ENCODE measurements at regions of chr3 and their contacts with region 1.

Region 1: GRCh38 chr3:187745201-187746058 is at the start of gene BCL6:
- DNase-seq: peak; percentile 92 to 99
- H3K4me3 ChIP-seq: peak within 1 kb of the TSS; percentile 88
- H3K27ac ChIP-seq: peak within 1 kb of the TSS; percentile 94
- H3K4me1 ChIP-seq: peaks cover 48% of the 10 kb centered on the region
- H3K27me3 ChIP-seq: no peaks in the 10 kb centered on the region
- CTCF ChIP-seq: 0 out of 2 replicates have a peak, but pooled peaks have one; percentile 19
- total RNA-seq, gene BCL6: 37.1 and 42.2 TPM in 2 replicates

Region 2: DNA sequence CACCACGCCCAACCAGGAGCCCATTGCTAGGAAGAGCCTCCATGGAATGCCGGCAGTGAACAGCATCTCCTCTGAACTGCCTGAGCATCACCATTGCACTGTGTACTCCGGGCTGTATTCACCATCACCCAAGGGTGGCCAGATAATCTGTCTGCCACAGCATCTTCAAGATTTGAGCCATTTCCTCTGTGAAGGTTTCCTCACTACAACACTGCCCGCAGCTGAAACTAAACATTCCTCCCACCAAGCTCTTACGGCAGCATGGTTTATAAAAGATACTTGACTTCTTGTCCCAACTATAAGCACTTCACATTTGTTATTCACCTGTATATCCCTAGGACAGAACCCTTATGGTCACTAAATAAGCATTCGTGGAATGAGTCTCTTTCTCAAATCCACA is 201.1 kb before region 1 on chr3:
- CTCF ChIA-PET with region 1: no interaction called
- POLR2A ChIA-PET with region 1: interaction called, 12 read pairs
- intact Hi-C with region 1: no loop called
- DNase-seq: no peak
- H3K4me3 ChIP-seq: no peak overlapping the region
- H3K27ac ChIP-seq: no peak overlapping the region
- H3K4me1 ChIP-seq: no peaks in the 10 kb centered on the region
- H3K27me3 ChIP-seq: peaks cover 72% of the 10 kb centered on the region
- CTCF ChIP-seq: no peak

Region 3: DNA sequence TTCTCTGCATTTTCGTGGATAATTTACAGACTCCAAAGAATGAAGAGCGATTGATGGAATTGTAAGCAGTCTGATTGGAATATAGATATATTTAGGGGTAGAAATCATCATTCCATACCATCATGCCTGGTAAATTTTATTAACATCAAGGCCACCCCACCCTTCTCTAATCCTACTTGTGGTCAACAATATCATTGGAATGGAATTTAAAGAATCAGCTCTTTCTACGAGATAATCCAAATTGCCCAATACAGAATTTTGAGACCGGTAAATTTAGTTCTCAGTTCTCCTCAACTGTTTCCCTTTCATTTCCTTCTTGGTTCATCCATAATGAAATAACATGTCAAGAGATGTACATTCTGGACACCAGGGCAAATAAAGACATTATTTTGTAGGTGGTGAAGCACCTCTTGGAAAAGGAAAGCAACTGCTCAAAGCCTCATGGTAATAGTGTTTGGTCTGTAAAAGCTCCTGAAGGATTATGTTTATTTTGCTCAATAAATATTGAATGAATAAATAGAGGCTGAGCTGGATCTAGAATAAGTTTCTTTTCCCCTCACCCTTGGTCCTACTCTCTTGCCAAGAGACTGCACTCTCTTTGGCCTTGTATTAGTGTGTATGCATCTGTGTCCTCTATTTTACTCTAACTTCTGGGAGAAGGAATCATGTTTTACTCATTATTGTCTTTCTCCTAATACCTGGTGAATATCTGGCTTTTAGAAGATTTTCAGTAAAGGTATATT is 133.5 kb after region 1 on chr3:
- CTCF ChIA-PET with region 1: no interaction called
- POLR2A ChIA-PET with region 1: interaction called, 7 read pairs
- intact Hi-C with region 1: loop called (anchors 1 kb)
- DNase-seq: peak; percentile 19 to 96
- H3K4me3 ChIP-seq: peak overlapping the region; percentile 30; the same call in 1 of the 2 replicates
- H3K27ac ChIP-seq: peak overlapping the region; percentile 86
- H3K4me1 ChIP-seq: peaks cover 52% of the 10 kb centered on the region
- H3K27me3 ChIP-seq: no peaks in the 10 kb centered on the region
- CTCF ChIP-seq: no peak

Region 4: DNA sequence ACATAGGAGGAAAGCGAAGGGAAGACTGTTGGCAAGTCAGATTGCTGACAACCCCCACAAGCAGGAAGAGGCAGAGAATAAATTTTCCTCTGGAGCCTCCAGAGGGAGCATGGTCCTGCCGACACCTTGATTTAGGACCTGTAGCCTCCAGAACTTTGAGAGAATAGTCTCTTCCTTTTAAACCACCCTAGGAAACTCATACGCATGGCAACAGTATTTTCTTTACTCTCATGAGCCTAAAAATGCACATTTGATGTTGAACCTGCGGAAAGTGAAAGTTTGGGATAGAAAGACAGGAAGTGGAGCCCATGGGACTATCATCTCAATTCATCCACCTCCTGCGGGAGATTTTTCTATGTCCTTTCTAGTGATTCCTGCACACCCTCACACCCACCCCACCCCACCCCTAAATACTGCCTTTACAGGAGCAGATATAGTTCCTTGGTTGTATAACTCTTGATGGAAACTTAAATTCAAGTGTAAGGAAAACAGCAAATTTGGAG is 291.8 kb after region 1 on chr3:
- CTCF ChIA-PET with region 1: interaction called, 5 read pairs
- POLR2A ChIA-PET with region 1: no interaction called
- intact Hi-C with region 1: loop called (anchors 1 kb)
- DNase-seq: peak in 1 of 2 experiments; percentile 36
- H3K4me3 ChIP-seq: no peak overlapping the region
- H3K27ac ChIP-seq: peak overlapping the region; percentile 35
- H3K4me1 ChIP-seq: peaks cover 47% of the 10 kb centered on the region
- H3K27me3 ChIP-seq: no peaks in the 10 kb centered on the region
- CTCF ChIP-seq: peak; percentile 64

Region 5: DNA sequence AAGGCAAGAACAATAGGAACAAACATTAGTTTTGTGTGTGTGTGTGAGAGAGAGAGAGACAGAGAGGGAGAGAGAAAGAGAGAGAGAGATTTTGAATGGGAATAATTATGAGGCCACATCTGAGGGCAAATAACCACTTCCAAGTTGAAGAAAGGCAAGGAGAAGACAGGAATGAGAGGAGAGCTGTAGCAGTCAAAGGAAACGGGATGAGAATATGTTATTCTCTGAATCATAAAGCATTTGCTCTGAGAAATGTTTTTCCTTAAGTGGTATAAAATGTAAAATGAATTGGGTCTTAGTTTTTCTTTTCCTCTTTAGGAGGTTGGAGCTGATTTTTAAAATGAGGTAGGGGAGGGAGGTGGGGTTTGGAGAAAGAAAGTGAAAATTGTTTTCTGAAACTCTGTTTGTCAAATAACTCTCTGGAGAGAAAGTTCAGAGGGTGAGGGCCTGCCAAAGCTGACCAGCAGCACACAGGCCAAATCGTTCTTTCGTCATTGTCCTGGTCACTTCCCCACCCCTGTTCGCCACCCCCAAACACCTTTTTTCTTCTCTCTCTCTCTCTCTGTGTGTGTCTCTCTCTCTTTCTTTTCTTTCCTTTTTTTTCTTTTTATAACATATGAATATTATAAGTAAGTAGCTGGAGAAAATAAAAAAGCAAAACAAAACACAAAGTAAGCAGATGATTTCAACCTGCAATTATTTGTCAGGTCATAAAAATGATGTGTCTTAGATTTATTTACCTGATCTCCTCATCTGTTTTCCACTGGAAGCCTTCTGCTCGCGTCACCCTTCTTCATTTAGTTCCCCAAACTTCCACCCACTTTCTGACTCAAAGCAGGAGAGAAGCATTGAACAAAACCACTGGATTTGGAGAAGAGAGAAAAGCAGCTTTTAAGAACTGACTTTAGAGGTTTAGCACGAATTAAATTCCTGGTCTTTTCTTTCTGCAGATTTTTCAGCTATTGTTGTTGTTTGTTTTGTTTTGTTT is 519.1 kb after region 1 on chr3:
- CTCF ChIA-PET with region 1: interaction called, 3 read pairs
- POLR2A ChIA-PET with region 1: interaction called, 13 read pairs
- intact Hi-C with region 1: loop called (anchors 1 kb)
- DNase-seq: no peak
- H3K4me3 ChIP-seq: no peak overlapping the region
- H3K27ac ChIP-seq: no peak overlapping the region
- H3K4me1 ChIP-seq: peaks cover 62% of the 10 kb centered on the region
- H3K27me3 ChIP-seq: no peaks in the 10 kb centered on the region
- CTCF ChIP-seq: no peak

Region 6: DNA sequence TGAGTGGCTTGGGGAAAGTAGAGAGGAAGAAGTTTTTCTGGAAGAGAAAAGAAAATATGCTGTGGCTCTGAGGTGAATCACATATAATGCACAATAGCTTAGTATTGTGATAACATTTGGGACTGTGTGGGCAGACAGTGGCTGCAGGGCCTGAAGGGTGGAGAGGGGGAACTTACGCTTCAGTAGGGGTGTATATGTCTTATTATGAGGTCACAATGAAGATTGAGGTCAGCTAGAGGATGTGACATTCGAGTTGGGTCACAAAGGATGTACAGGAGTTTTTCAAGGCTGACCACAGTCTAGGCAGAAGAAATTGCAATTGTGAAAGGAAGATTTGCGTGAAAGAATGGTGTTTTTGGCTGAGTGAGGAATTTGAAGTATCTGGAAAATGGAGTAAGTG is 823.3 kb after region 1 on chr3:
- CTCF ChIA-PET with region 1: no interaction called
- POLR2A ChIA-PET with region 1: no interaction called
- intact Hi-C with region 1: loop called (anchors 10 kb)
- DNase-seq: no peak
- H3K4me3 ChIP-seq: no peak overlapping the region
- H3K27ac ChIP-seq: no peak overlapping the region
- H3K4me1 ChIP-seq: peaks cover 12% of the 10 kb centered on the region
- H3K27me3 ChIP-seq: no peaks in the 10 kb centered on the region
- CTCF ChIP-seq: no peak

Region 7: GRCh38 chr3:188954590-188955208 is 1209.3 kb after region 1 on chr3:
- CTCF ChIA-PET with region 1: interaction called, 129 read pairs
- POLR2A ChIA-PET with region 1: interaction called, 8 read pairs
- intact Hi-C with region 1: loop called (anchors 1 kb)
- DNase-seq: peak; percentile 67 to 85
- H3K4me3 ChIP-seq: no peak overlapping the region
- H3K27ac ChIP-seq: no peak overlapping the region
- H3K4me1 ChIP-seq: peaks cover 21% of the 10 kb centered on the region
- H3K27me3 ChIP-seq: no peaks in the 10 kb centered on the region
- CTCF ChIP-seq: peak; percentile 98

Region 8: GRCh38 chr3:189186101-189186500 is 1440.7 kb after region 1 on chr3:
- CTCF ChIA-PET with region 1: no interaction called
- POLR2A ChIA-PET with region 1: no interaction called
- intact Hi-C with region 1: no loop called
- DNase-seq: no peak
- H3K4me3 ChIP-seq: no peak overlapping the region
- H3K27ac ChIP-seq: no peak overlapping the region
- H3K4me1 ChIP-seq: peaks cover 8% of the 10 kb centered on the region
- H3K27me3 ChIP-seq: no peaks in the 10 kb centered on the region
- CTCF ChIP-seq: no peak

Region 9: DNA sequence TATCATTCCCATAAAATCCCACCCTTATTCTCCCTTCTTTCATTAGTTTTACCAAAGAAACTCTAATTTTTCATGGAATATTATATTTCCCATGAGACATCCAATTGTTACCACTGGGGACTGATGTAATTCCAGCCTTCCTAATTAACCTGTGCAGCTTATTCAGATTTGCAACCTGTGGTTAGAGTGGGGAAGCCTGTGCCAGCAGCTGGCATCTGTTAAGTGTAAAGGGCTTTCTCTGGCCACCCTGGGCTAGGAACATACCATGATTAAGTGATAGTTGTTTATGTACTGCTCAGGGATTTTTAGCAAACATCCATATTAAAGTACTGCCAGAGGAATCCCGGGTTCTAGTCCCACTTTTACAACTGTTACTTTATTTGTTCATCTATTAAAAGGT is 1504.6 kb after region 1 on chr3:
- CTCF ChIA-PET with region 1: no interaction called
- POLR2A ChIA-PET with region 1: no interaction called
- intact Hi-C with region 1: no loop called
- DNase-seq: no peak
- H3K4me3 ChIP-seq: no peak overlapping the region
- H3K27ac ChIP-seq: no peak overlapping the region
- H3K4me1 ChIP-seq: no peaks in the 10 kb centered on the region
- H3K27me3 ChIP-seq: no peaks in the 10 kb centered on the region
- CTCF ChIP-seq: no peak

Measured in PC-9 (cell line).